ENCODE measurements at regions of chr1 and their contacts with region 1.

Region 1: GRCh38 chr1:119816407-119816806 is 5.1 kb upstream of the REG4 start:
- DNase-seq: no peak
- H3K4me3 Mint-ChIP-seq: no peak overlapping the region
- H3K27ac Mint-ChIP-seq: no peak overlapping the region
- H3K4me1 Mint-ChIP-seq: no peaks in the 10 kb centered on the region
- H3K27me3 Mint-ChIP-seq: peaks cover 10% of the 10 kb centered on the region
- CTCF ChIP-seq: no peak

Region 2: GRCh38 chr1:119840745-119841144 is 24.3 kb after region 1 on chr1:
- CTCF ChIA-PET with region 1: interaction called, 4 read pairs
- POLR2A ChIA-PET with region 1: no interaction called
- intact Hi-C with region 1: loop called (anchors 2 kb)
- DNase-seq: no peak
- H3K4me3 Mint-ChIP-seq: no peak overlapping the region
- H3K27ac Mint-ChIP-seq: no peak overlapping the region
- H3K4me1 Mint-ChIP-seq: no peaks in the 10 kb centered on the region
- H3K27me3 Mint-ChIP-seq: peaks cover 34% of the 10 kb centered on the region
- CTCF ChIP-seq: no peak

Measured in MCF 10A (cell line).